Activated T-helper 1 cell treated with anti-CD3 and anti-CD28 coated beads, Interleukin-12 subunit alpha, Interleukin-12 subunit beta, Interleukin-2, Interleukin-4 antibody, amounts not matched to agents 30 ng/mL and 10 ng/mL and 1 ng/mL, durations not matched to agents 14 hours and 24 hours and 36 hours (primary cell): ENCODE measurements at regions of chr14 and their contacts with region 1.

Region 1: GRCh38 chr14:21768116-21768874 is 94.7 kb upstream of the OR4E1 start:
- DNase-seq: peak; percentile 12
- H3K4me3 Mint-ChIP-seq: peak overlapping the region; percentile 75
- H3K27ac Mint-ChIP-seq: peak overlapping the region; percentile 73
- H3K4me1 Mint-ChIP-seq: peaks cover 12% of the 10 kb centered on the region
- H3K27me3 Mint-ChIP-seq: peaks cover 9% of the 10 kb centered on the region

Region 2: GRCh38 chr14:21739054-21739453 is 29.2 kb before region 1 on chr14:
- intact Hi-C with region 1: no loop called
- DNase-seq: no peak
- H3K4me3 Mint-ChIP-seq: peak overlapping the region; percentile 54
- H3K27ac Mint-ChIP-seq: peak overlapping the region; percentile 9
- H3K4me1 Mint-ChIP-seq: peaks cover 12% of the 10 kb centered on the region
- H3K27me3 Mint-ChIP-seq: peaks cover 32% of the 10 kb centered on the region

Region 3: GRCh38 chr14:21825149-21825743 is 57.0 kb after region 1 on chr14:
- intact Hi-C with region 1: loop called (anchors 5 kb)
- DNase-seq: peak; percentile 14
- H3K4me3 Mint-ChIP-seq: peak overlapping the region; percentile 61
- H3K27ac Mint-ChIP-seq: peak overlapping the region; percentile 76
- H3K4me1 Mint-ChIP-seq: peaks cover 12% of the 10 kb centered on the region
- H3K27me3 Mint-ChIP-seq: peaks cover 14% of the 10 kb centered on the region